B cell (primary cell): ENCODE measurements at regions of chr1 and their contacts with region 1.

Region 1: GRCh38 chr1:41641478-41641819 is 157.0 kb upstream of the EDN2 start:
- DNase-seq: no peak
- ATAC-seq: peak; percentile 64
- H3K4me3 ChIP-seq: no peak overlapping the region
- H3K4me3 Mint-ChIP-seq: no peak overlapping the region
- H3K27ac ChIP-seq: peak overlapping the region; percentile 45 to 68
- H3K27ac Mint-ChIP-seq: no peak overlapping the region
- H3K4me1 ChIP-seq: peaks cover 64 to 77% of the 10 kb centered on the region in 2 donors
- H3K4me1 Mint-ChIP-seq: peaks cover 51% of the 10 kb centered on the region
- H3K27me3 ChIP-seq: no peaks in the 10 kb centered on the region
- H3K27me3 Mint-ChIP-seq: no peaks in the 10 kb centered on the region
- CTCF ChIP-seq: no peak

Region 2: GRCh38 chr1:41580520-41581172 is 60.8 kb before region 1 on chr1:
- CTCF ChIA-PET with region 1: no interaction called
- POLR2A ChIA-PET with region 1: no interaction called
- intact Hi-C with region 1: no loop called
- DNase-seq: no peak
- ATAC-seq: no peak
- H3K4me3 ChIP-seq: no peak overlapping the region
- H3K4me3 Mint-ChIP-seq: no peak overlapping the region
- H3K27ac ChIP-seq: no peak overlapping the region
- H3K27ac Mint-ChIP-seq: no peak overlapping the region
- H3K4me1 ChIP-seq: no peaks in the 10 kb centered on the region
- H3K4me1 Mint-ChIP-seq: peaks cover 8% of the 10 kb centered on the region
- H3K27me3 ChIP-seq: no peaks in the 10 kb centered on the region
- H3K27me3 Mint-ChIP-seq: no peaks in the 10 kb centered on the region
- CTCF ChIP-seq: no peak

Region 3: DNA sequence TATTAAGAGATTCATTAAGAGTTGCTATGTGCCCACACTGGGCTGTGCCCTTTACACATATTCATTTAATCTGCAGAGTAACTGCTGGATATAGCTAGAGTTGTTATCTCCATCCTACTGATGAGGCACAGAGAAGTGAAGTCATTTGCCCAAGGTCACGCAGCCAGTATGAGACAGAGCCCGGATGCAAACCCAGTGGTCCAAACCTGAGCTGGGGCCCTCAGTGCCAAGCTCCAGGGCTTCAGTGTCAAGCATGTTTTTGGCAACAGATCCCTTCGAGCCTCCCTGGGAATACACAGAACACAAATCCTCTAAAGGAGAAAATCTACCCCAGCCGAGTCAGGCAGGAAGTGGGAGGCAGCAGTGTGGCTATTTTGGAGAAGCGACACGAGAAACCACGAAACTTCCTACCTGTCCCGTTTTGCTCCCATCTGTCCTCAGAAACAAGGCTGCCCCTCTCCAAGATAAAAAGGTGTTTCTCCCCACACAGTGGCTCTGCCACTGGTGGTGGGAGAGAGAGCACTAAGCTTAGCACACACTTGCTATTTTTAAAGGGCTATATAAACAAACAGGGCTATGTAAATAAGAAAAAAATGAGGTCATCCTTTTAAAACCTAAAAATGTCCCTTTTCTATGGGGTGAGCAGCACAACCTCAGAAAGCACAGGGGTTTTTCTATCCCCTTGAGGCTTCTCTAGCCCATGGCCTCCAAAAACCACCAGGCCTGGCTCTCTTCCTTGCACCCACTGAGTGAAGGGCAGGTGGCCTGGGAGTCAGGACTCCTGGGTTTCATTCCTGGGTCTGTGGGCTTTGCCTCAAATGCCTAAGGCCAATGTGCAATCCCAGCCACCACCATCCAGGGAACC is 18.4 kb before region 1 on chr1:
- CTCF ChIA-PET with region 1: no interaction called
- POLR2A ChIA-PET with region 1: interaction called, 9 read pairs
- intact Hi-C with region 1: loop called (anchors 2 kb)
- DNase-seq: peak; percentile 74
- ATAC-seq: peak; percentile 94
- H3K4me3 ChIP-seq: peak overlapping the region in 4 of 5 experiments; percentile 16 to 56 (median 34)
- H3K4me3 Mint-ChIP-seq: peak overlapping the region; percentile 84
- H3K27ac ChIP-seq: peak overlapping the region; percentile 62 to 77
- H3K27ac Mint-ChIP-seq: peak overlapping the region; percentile 89
- H3K4me1 ChIP-seq: peaks cover 27 to 42% of the 10 kb centered on the region in 2 donors
- H3K4me1 Mint-ChIP-seq: peaks cover 65% of the 10 kb centered on the region
- H3K27me3 ChIP-seq: no peaks in the 10 kb centered on the region
- H3K27me3 Mint-ChIP-seq: no peaks in the 10 kb centered on the region
- CTCF ChIP-seq: no peak